Activated CD4-positive, alpha-beta T cell treated with anti-CD3 and anti-CD28 coated beads for 36 hours (primary cell): ENCODE measurements at regions of chr16 and their contacts with region 1.

Region 1: DNA sequence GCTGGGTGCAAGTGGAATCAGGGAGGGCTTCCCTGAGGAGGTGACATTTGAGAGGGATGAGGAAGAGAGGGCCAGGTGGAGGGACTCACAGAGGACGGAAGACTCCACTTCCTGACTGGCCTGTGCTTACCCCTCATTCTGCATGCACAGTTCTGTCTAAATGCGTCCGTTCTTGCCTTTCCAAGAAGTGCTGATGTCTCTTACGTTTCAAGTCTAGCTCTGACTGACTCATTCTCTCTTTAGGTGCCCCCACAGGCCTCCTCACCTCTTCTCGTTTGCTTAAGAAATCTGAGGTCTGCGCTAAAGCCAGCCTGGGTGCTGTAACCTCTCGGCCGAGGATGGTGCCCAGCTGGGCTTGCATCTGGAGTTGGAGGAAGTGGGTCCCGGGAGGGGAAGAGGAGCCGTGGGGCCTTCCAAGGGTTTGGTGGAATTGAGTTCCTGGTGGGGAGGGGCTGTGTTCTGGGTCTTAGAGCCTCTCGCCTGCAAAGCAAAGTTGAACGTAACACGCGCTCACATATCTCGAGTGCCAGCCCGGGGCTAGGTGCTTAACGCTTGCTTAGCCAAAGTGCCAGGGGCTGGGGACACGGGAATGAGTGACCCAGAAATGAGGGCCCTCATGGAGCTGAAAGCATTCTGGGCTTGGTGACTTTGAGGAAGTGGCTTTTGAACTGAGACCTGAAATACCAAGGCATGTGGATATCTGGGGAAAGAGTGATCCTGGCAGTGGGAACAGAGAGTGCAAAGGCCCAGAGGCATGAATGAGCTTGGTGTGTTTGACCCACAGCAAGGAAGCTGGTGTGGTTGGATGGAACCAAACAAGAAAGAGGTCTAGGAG is 4.8 kb downstream of the IL4R start:
- DNase-seq: peak; percentile 80
- ATAC-seq: peak; percentile 78
- H3K4me3 Mint-ChIP-seq: peak overlapping the region; percentile 90
- H3K27ac Mint-ChIP-seq: peak overlapping the region; percentile 97
- H3K4me1 Mint-ChIP-seq: peaks cover 79% of the 10 kb centered on the region
- H3K27me3 Mint-ChIP-seq: no peaks in the 10 kb centered on the region

Region 2: DNA sequence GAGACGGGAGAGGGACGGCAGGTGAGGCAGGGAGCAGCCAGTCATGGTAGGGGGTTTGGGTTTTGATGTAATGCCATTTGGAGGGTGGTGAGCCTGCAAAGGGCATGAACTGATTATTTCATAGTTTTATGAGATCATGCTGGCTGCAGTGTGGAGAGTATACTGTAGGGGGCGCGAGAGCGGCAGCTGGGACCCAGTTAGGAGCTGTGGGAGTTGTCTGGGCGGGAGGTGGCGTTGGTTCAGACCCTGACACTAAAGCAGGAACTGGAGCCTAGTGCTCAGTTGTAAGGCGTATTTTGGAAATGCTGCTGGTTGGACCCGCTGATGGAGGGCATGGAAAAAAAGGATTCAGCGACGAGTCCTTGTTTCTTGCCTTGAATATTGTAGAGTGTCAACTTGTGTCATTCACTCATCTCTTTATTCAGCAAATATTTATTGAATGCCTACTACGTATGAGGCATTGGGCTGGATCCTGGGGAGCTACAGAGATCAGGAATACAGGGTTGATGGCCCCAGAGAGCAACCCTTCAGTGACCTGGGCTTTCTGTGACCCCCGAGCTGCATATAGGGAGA is 139.0 kb before region 1 on chr16:
- CTCF ChIA-PET with region 1: interaction called, 3 read pairs
- POLR2A ChIA-PET with region 1: no interaction called
- intact Hi-C with region 1: loop called (anchors 2 kb)
- DNase-seq: peak; percentile 95
- ATAC-seq: peak; percentile 91
- H3K4me3 Mint-ChIP-seq: no peak overlapping the region
- H3K27ac Mint-ChIP-seq: peak overlapping the region; percentile 80
- H3K4me1 Mint-ChIP-seq: peaks cover 48% of the 10 kb centered on the region
- H3K27me3 Mint-ChIP-seq: no peaks in the 10 kb centered on the region

Region 3: DNA sequence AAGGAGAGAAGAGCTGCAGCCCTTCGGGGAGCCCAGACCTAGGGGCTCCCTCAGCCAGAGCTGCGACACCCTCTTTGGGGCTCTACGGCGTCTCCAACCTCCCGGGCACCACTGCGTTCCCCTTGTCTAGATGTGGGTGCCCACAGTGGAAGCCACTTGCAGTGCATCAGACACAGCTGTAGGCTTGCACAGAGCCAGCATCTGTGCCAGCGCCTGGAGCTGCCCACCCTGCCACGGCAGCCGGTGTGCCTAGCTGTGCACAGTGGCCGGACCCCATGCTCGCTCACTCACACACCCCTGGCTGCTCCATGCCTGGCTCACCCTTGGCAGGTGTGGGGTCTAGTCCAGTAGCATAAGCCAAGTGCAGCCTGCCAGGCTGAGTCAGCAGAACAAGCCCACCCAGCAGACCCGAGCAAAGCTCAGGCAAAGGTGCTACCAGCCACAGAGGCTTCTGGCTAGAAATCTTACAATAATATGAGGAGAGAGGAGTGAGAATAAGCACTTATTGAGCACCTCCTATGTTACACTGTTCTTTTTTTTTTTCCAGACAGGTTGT is 128.2 kb before region 1 on chr16:
- CTCF ChIA-PET with region 1: no interaction called
- POLR2A ChIA-PET with region 1: no interaction called
- intact Hi-C with region 1: no loop called
- DNase-seq: no peak
- ATAC-seq: no peak
- H3K4me3 Mint-ChIP-seq: no peak overlapping the region
- H3K27ac Mint-ChIP-seq: no peak overlapping the region
- H3K4me1 Mint-ChIP-seq: peaks cover 15% of the 10 kb centered on the region
- H3K27me3 Mint-ChIP-seq: no peaks in the 10 kb centered on the region

Region 4: GRCh38 chr16:27253526-27253930 is 65.1 kb before region 1 on chr16:
- CTCF ChIA-PET with region 1: interaction called, 4 read pairs
- POLR2A ChIA-PET with region 1: interaction called, 7 read pairs
- intact Hi-C with region 1: loop called in 1 of 2 experiments (anchors 1 kb)
- DNase-seq: no peak
- ATAC-seq: peak; percentile 63
- H3K4me3 Mint-ChIP-seq: peak overlapping the region; percentile 41
- H3K27ac Mint-ChIP-seq: peak overlapping the region; percentile 88
- H3K4me1 Mint-ChIP-seq: peaks cover 82% of the 10 kb centered on the region
- H3K27me3 Mint-ChIP-seq: no peaks in the 10 kb centered on the region

Region 5: GRCh38 chr16:27273670-27274423 is 44.8 kb before region 1 on chr16:
- CTCF ChIA-PET with region 1: interaction called, 5 read pairs
- POLR2A ChIA-PET with region 1: interaction called, 10 read pairs
- intact Hi-C with region 1: loop called in 1 of 2 experiments (anchors 1 kb)
- DNase-seq: peak; percentile 69
- ATAC-seq: peak; percentile 89
- H3K4me3 Mint-ChIP-seq: peak overlapping the region; percentile 35
- H3K27ac Mint-ChIP-seq: peak overlapping the region; percentile 87
- H3K4me1 Mint-ChIP-seq: peaks cover 70% of the 10 kb centered on the region
- H3K27me3 Mint-ChIP-seq: no peaks in the 10 kb centered on the region

Region 6: DNA sequence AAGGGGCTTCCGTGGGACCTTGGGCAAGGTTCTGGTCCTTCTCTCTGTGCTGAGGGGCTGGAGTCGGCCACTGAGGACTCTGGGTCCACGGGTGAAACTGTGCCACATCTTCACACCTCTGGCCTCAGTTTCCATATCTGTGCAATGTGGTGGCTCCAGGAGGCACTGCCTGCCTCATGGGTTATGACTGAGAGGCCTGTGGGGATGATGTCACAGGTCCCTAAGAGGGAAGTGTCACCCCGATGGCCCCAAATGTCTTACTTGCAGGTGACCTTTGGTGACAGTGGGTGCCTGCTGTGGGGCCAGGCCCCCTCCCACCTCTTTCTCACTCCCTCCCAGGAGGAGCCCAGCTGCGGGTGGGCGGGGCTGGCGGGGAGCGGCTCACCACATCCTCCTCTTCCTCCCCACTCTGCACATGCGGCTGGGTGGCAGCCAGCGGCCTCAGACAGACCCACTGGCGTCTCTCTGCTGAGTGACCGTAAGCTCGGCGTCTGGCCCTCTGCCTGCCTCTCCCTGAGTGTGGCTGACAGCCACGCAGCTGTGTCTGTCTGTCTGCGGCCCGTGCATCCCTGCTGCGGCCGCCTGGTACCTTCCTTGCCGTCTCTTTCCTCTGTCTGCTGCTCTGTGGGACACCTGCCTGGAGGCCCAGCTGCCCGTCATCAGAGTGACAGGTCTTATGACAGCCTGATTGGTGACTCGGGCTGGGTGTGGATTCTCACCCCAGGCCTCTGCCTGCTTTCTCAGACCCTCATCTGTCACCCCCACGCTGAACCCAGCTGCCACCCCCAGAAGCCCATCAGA is 83.4 kb after region 1 on chr16 and contains the start of gene IL21R:
- CTCF ChIA-PET with region 1: interaction called, 5 read pairs
- POLR2A ChIA-PET with region 1: interaction called, 22 read pairs
- intact Hi-C with region 1: loop called (anchors 1 to 2 kb)
- DNase-seq: peak; percentile 94
- ATAC-seq: peak; percentile 60
- H3K4me3 Mint-ChIP-seq: peak within 1 kb of the TSS; percentile 99
- H3K27ac Mint-ChIP-seq: peak within 1 kb of the TSS; percentile 97
- H3K4me1 Mint-ChIP-seq: peaks cover 38% of the 10 kb centered on the region
- H3K27me3 Mint-ChIP-seq: no peaks in the 10 kb centered on the region
- total RNA-seq, gene IL21R: 61.8 to 73.5 TPM

Region 7: GRCh38 chr16:27455700-27456099 is 137.1 kb after region 1 on chr16:
- CTCF ChIA-PET with region 1: no interaction called
- POLR2A ChIA-PET with region 1: no interaction called
- intact Hi-C with region 1: loop called (anchors 2 to 5 kb)
- DNase-seq: peak; percentile 58
- ATAC-seq: no peak
- H3K4me3 Mint-ChIP-seq: no peak overlapping the region
- H3K27ac Mint-ChIP-seq: peak overlapping the region; percentile 86
- H3K4me1 Mint-ChIP-seq: peaks cover 58% of the 10 kb centered on the region
- H3K27me3 Mint-ChIP-seq: no peaks in the 10 kb centered on the region

Region 8: GRCh38 chr16:28082624-28083023 is 764.0 kb after region 1 on chr16:
- CTCF ChIA-PET with region 1: no interaction called
- POLR2A ChIA-PET with region 1: no interaction called
- intact Hi-C with region 1: no loop called
- DNase-seq: no peak
- ATAC-seq: no peak
- H3K4me3 Mint-ChIP-seq: no peak overlapping the region
- H3K27ac Mint-ChIP-seq: no peak overlapping the region
- H3K4me1 Mint-ChIP-seq: no peaks in the 10 kb centered on the region
- H3K27me3 Mint-ChIP-seq: no peaks in the 10 kb centered on the region